Activated CD4-positive, alpha-beta memory T cell treated with anti-CD3 and anti-CD28 coated beads for 36 hours (primary cell): ENCODE measurements at regions of chr3 and their contacts with region 1.

Region 1: DNA sequence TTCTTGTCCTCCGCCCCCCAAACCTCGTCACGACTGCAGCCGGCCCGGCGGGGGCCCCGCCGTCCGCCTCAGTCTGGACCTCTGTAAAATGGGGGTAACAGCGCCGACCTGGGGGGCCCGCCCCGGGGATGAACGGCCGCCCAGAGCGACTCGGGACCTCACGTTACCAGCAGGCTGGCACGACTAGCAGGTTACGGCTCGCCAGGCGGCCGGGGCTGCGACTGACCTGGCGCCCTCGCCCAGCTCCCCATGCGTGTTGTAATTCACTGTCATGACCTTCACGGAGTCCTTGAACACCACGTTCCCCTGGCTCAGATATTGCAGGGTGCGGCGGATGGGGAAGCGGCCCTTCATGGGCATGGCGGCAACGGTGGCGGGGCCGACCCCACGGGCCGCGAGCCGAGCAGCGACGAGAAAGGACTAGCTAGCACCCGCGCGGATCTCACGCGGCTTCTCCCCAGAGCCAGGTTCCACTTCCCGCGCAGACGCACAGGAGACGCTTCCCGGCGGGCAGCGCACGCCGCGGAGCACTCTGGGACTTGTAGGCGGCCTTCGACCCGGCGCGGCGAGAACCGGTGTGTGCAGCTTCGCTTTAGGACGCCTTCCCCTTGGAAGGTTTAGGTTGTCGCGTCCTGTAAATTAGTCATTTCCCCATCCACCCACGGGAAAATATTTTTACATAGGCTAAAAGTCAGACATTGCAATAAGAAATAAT is at the start of gene MRPS25:
- DNase-seq: peak; percentile 95
- H3K4me3 Mint-ChIP-seq: peak within 1 kb of the TSS; percentile 96
- H3K27ac Mint-ChIP-seq: peak within 1 kb of the TSS; percentile 90
- H3K4me1 Mint-ChIP-seq: peaks cover 22% of the 10 kb centered on the region
- H3K27me3 Mint-ChIP-seq: no peaks in the 10 kb centered on the region
- total RNA-seq, gene MRPS25: 53.8 to 58.5 TPM

Region 2: GRCh38 chr3:14651440-14652251 is 413.3 kb before region 1 on chr3 and contains the start of gene CCDC174:
- CTCF ChIA-PET with region 1: no interaction called
- POLR2A ChIA-PET with region 1: interaction called, 3 read pairs
- intact Hi-C with region 1: loop called (anchors 1 kb)
- DNase-seq: peak; percentile 97
- H3K4me3 Mint-ChIP-seq: peak within 1 kb of the TSS; percentile 89
- H3K27ac Mint-ChIP-seq: peak within 1 kb of the TSS; percentile 98
- H3K4me1 Mint-ChIP-seq: peaks cover 35% of the 10 kb centered on the region
- H3K27me3 Mint-ChIP-seq: no peaks in the 10 kb centered on the region
- total RNA-seq, gene CCDC174: 16.6 to 18.6 TPM

Region 3: GRCh38 chr3:15098503-15099363 is 33.7 kb after region 1 on chr3 and contains the start of gene RBSN:
- CTCF ChIA-PET with region 1: no interaction called
- POLR2A ChIA-PET with region 1: interaction called, 23 read pairs
- intact Hi-C with region 1: loop called (anchors 1 kb)
- DNase-seq: peak; percentile 98
- H3K4me3 Mint-ChIP-seq: peak within 1 kb of the TSS; percentile 94
- H3K27ac Mint-ChIP-seq: peak within 1 kb of the TSS; percentile 94
- H3K4me1 Mint-ChIP-seq: peaks cover 18% of the 10 kb centered on the region
- H3K27me3 Mint-ChIP-seq: no peaks in the 10 kb centered on the region
- total RNA-seq, gene RBSN: 15.0 to 15.3 TPM

Region 4: DNA sequence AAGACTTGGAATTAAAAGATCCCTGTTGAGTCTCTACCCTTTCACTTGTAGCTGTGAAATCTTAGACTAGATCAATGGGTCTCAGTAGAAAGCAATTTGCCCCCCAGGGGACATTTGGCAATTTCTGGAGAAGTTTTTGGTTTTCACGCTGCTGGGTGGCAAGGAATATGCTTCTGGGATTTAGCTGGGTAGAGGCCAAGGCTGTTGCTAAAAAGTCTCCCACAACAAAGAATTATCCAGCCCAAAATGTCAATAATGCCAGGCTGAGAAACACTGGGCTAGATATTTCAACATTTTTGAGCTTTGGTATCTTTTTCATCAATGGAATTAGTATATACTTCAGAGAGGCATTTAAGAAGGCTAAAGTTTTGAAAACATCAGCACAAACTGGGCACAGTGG is 149.8 kb after region 1 on chr3:
- CTCF ChIA-PET with region 1: no interaction called
- POLR2A ChIA-PET with region 1: no interaction called
- intact Hi-C with region 1: no loop called
- DNase-seq: no peak
- H3K4me3 Mint-ChIP-seq: no peak overlapping the region
- H3K27ac Mint-ChIP-seq: no peak overlapping the region
- H3K4me1 Mint-ChIP-seq: peaks cover 18% of the 10 kb centered on the region
- H3K27me3 Mint-ChIP-seq: no peaks in the 10 kb centered on the region

Region 5: GRCh38 chr3:15585111-15585845 is 520.3 kb after region 1 on chr3:
- CTCF ChIA-PET with region 1: no interaction called
- POLR2A ChIA-PET with region 1: no interaction called
- intact Hi-C with region 1: no loop called
- DNase-seq: no peak
- H3K4me3 Mint-ChIP-seq: no peak overlapping the region
- H3K27ac Mint-ChIP-seq: no peak overlapping the region
- H3K4me1 Mint-ChIP-seq: no peaks in the 10 kb centered on the region
- H3K27me3 Mint-ChIP-seq: no peaks in the 10 kb centered on the region